GM18951 (cell line): ENCODE measurements at regions of chr9 and their contacts with region 1.

Region 1: DNA sequence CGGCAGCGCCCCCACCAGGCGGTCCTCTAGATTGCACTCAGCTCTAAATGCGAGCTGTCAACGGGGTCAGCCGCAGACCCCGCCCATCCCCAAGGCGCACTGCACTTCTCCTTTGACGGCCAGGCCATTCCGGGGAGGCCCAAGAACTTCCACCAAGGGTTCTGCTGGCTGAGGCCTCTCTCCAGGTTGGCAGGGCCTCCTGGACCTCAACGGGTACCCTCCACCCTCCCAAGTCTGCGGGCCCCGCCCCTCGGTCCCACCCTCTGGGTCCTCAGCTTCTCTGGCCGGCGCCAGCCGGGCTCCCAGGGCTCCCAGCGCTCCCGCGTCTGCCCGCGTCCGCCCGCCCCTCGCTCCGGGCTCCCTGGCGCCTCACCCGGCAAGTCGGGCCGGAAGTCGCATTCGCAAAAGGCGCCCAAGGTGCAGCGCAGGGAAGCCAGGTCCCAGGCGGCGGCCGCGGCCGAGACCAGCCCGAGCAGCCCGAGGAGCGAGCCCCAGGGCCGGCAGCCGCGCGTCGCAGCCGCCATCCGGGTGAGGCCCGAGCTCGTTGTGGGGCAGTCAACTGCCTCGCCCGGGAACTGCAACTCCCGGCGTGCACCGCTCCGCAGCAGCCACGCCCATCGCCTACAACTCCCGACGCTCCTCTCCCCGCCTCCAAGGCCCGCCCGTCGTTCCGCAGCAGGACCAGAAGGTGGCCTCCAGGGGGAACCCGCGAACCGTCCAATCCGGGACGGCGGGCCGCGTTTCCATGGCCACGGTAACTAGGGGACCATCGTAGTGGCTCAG is at the start of gene TOR2A:
- POLR2A ChIP-seq: peak; percentile 83

Region 2: GRCh38 chr9:127916665-127917613 is 182.0 kb after region 1 on chr9 and contains the start of gene ST6GALNAC4:
- in situ Hi-C with region 1: loop called (anchors 10 kb)
- POLR2A ChIP-seq: peak; percentile 74